Gastrocnemius medialis (tissue), 4 donors: ENCODE measurements at regions of chr6 and their contacts with region 1.

Region 1: DNA sequence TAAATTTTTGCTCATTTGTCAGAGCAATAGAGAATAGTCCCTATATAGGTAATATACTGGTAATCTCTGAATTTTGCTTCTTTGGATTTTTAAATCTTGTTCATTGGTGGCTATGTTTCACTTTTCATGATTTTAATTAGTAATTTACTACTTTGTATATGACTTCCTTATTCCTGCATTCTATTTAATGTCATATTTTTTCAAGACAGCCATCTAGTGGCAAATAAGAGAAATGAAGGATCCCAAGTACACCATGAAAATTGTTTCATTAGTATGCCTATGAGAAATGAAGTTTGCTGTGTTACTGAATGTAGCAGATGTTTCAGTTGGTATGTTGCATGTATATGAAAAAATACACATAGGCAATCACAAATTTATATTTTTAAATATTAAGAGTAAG is 82.4 kb downstream of the ZNF292 start:
- DNase-seq: no peak
- ATAC-seq: peak in 1 of 2 donors; percentile 21
- H3K4me3 ChIP-seq: no peak overlapping the region
- H3K27ac ChIP-seq: no peak overlapping the region
- H3K4me1 ChIP-seq: no peaks in the 10 kb centered on the region
- H3K27me3 ChIP-seq: no peaks in the 10 kb centered on the region
- CTCF ChIP-seq: peak in 4 of 5 experiments; percentile 37 to 68 (median 50)
- POLR2A ChIP-seq: no peak

Region 2: GRCh38 chr6:87099472-87099871 is 138.3 kb before region 1 on chr6:
- in situ Hi-C with region 1: no loop called
- intact Hi-C with region 1: no loop called
- DNase-seq: no peak
- ATAC-seq: no peak
- H3K4me3 ChIP-seq: no peak overlapping the region
- H3K27ac ChIP-seq: no peak overlapping the region
- H3K4me1 ChIP-seq: no peaks in the 10 kb centered on the region
- H3K27me3 ChIP-seq: no peaks in the 10 kb centered on the region
- CTCF ChIP-seq: no peak
- POLR2A ChIP-seq: no peak

Region 3: DNA sequence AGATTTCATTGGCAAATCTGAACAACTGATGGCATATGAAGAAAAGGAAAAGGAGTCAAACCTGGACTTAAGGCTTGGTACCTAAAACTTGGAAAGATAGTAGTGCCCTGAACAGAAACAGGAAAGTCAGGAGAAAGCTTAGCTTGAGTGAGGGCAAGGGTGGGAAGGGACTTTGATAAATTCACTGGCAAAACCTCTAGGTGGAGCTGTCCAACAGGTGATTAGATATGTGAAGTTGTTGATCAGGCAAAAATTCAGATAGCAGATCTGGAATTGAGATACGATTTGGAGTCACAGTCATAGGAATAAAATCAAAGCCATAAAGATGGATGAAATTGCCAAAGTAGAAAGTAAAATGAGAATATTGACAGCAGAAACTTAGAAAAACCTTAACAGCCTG is 98.6 kb before region 1 on chr6:
- in situ Hi-C with region 1: loop called (anchors 5 to 25 kb)
- intact Hi-C with region 1: loop called (anchors 1 kb)
- DNase-seq: no peak
- ATAC-seq: peak; percentile 76 to 85
- H3K4me3 ChIP-seq: no peak overlapping the region
- H3K27ac ChIP-seq: no peak overlapping the region
- H3K4me1 ChIP-seq: no peaks in the 10 kb centered on the region
- H3K27me3 ChIP-seq: no peaks in the 10 kb centered on the region
- CTCF ChIP-seq: peak; percentile 52 to 76 (median 71)
- POLR2A ChIP-seq: no peak

Region 4: GRCh38 chr6:87483929-87484328 is 246.1 kb after region 1 on chr6:
- in situ Hi-C with region 1: no loop called
- intact Hi-C with region 1: no loop called
- DNase-seq: no peak
- ATAC-seq: no peak
- H3K4me3 ChIP-seq: no peak overlapping the region
- H3K27ac ChIP-seq: no peak overlapping the region
- H3K4me1 ChIP-seq: no peaks in the 10 kb centered on the region
- H3K27me3 ChIP-seq: no peaks in the 10 kb centered on the region
- CTCF ChIP-seq: peak in 1 of 5 experiments; percentile 38
- POLR2A ChIP-seq: no peak